ENCODE measurements at regions of chr5 and their contacts with region 1.

Region 1: GRCh38 chr5:10489810-10490426 is 48.2 kb downstream of the ROPN1L start:
- DNase-seq: peak; percentile 80 to 94 (median 90)
- H3K4me3 ChIP-seq: peak overlapping the region in 2 of 7 experiments; percentile 13 to 57
- H3K27ac ChIP-seq: no peak overlapping the region
- H3K4me1 ChIP-seq: peaks cover 8 to 39% (median 32%) of the 10 kb centered on the region in 4 experiments
- H3K27me3 ChIP-seq: no peaks in the 10 kb centered on the region

Region 2: GRCh38 chr5:10353241-10354047 is 136.5 kb before region 1 on chr5 and contains the start of gene MARCHF6:
- CTCF ChIA-PET with region 1: no interaction called
- POLR2A ChIA-PET with region 1: no interaction called
- DNase-seq: peak; percentile 93 to 96 (median 95)
- H3K4me3 ChIP-seq: peak within 1 kb of the TSS; percentile 84 to 100 (median 96)
- H3K27ac ChIP-seq: peak within 1 kb of the TSS; percentile 91 to 96
- H3K4me1 ChIP-seq: peaks cover 11 to 51% (median 36%) of the 10 kb centered on the region in 4 experiments
- H3K27me3 ChIP-seq: no peaks in the 10 kb centered on the region

Region 3: DNA sequence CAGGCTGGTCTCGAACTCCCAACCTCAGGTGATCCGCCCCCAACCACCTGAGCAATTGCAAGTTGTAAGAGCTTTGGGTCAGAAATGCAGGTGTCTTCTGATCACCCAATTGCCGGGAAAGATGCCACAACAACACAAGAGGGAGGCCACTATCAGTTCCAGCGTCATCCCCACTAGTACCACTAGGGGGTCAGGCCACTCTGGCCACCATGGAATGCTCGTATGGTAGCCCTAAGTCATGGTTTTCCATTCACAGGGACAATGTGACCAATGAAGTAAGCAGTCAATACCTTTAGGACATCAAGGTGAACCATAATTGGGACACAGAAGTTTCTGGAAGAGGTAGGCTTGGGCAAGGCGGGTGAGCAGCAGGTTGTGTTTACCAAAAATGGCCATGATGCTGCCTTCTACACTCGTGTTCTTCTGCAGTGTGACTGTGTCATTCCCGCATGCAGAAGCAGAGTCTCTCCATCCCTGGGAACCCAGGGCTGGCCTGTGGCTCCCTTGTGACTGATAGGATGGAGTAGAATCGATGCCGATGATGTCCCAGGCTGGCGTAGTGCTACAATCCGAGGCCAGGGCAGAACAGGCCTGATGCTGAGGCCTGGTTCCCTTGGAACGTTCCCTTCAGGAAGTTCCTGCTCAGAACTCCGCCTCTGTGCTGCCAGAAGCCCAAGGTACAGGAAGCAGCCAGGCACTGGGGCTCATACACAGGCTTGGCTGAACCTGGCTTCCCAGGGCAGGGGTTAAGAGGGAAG is 31.7 kb after region 1 on chr5:
- CTCF ChIA-PET with region 1: interaction called, 27 read pairs
- POLR2A ChIA-PET with region 1: no interaction called
- DNase-seq: no peak
- H3K4me3 ChIP-seq: no peak overlapping the region
- H3K27ac ChIP-seq: no peak overlapping the region
- H3K4me1 ChIP-seq: peaks cover 0 to 9% (median 4%) of the 10 kb centered on the region in 4 experiments
- H3K27me3 ChIP-seq: no peaks in the 10 kb centered on the region

Region 4: DNA sequence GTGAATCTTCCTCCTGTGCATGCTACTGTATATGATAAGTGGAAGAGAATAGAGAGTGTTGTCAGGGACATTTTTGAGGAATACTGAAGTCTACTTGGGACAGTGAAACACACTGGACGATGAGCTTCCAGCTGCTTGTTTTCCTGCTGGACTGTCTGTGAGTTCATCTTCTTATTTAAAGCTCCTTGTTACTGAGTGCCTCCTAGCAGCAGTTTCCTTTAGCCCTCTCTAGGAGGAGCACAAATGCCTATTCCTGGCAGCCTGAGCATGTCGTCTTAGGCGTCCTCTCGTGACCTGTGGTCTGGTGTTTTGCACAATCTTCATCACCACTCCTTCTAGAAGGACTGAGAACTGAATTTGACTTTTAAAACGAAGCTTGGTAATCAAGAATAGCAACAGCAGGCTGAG is 117.8 kb after region 1 on chr5:
- CTCF ChIA-PET with region 1: interaction called, 10 read pairs
- POLR2A ChIA-PET with region 1: interaction called, 3 read pairs
- DNase-seq: peak; percentile 86 to 94 (median 88)
- H3K4me3 ChIP-seq: peak overlapping the region in 6 of 7 experiments; percentile 35 to 66 (median 38)
- H3K27ac ChIP-seq: peak overlapping the region; percentile 77 to 84
- H3K4me1 ChIP-seq: peaks cover 9 to 49% (median 28%) of the 10 kb centered on the region in 4 experiments
- H3K27me3 ChIP-seq: no peaks in the 10 kb centered on the region

Measured in common myeloid progenitor, CD34-positive (primary cell).